ENCODE measurements at regions of chr9 and their contacts with region 1.

Region 1: DNA sequence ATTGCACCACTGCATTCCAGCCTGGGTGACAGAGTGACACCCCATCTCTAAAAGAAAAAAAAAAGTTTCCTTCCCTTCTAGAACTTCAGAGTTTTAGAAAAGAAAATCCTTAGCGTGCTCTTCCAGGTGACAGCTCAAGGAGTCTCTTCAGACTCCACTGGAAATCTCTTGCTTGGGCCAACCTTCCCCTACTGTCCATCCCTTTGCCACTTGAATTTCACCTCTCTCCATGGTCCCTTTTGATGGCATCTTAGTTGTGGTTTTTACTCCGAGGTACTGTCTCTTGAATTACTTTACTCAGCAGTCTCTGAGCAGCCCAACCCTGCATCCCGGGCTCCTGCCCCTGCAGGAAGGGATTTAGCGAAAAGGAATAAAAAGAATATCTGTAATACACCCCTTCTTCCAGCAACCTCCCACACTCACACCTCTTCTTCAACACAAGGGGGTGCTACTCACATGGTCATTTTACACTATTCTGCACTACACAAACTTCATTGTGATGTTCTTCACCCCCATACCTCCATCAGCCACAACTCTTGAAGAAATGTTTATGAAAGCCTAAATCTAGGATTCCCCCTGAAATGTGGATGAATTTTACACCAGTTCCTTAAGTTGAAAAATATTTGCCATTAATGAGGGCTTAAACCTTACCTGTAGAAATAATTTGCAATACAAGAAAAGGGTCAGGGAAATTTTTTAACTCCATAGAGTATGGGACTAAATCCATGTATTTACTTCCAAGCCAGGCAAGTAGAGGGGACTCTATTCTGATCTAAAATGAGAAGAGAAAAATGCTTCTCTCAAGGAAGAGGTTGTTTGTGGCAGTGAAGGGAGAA is 25.9 kb downstream of the TPD52L3 start:
- DNase-seq: peak; percentile 76
- H3K4me3 ChIP-seq: no peak overlapping the region
- H3K27ac ChIP-seq: no peak overlapping the region
- H3K4me1 ChIP-seq: no peaks in the 10 kb centered on the region
- CTCF ChIP-seq: peak; percentile 94

Region 2: DNA sequence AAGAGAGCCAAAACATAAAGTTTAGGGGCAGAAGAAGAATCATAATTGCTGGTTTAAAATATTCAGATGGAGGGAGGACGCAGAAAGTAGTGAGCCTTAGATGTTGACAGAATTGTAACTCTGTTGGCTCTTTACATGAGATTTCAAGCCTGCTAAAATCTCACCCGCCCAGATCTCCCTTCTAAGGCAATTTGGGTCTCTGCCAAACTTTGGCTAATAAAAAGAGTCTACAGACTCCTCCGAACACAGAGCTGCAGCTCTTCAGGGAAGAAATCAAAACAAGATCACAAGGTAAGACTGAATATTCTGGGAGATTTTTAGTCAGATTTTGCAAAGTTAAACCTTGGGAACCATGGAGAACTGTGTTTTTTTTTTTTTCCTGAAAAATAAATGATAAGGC is 138.5 kb before region 1 on chr9 and contains the start of gene IL33:
- CTCF ChIA-PET with region 1: no interaction called
- POLR2A ChIA-PET with region 1: no interaction called
- intact Hi-C with region 1: no loop called
- DNase-seq: no peak
- H3K4me3 ChIP-seq: no peak within 1 kb of the TSS
- H3K27ac ChIP-seq: no peak within 1 kb of the TSS
- H3K4me1 ChIP-seq: no peaks in the 10 kb centered on the region
- CTCF ChIP-seq: no peak
- total RNA-seq, gene IL33: not detected in 2 replicates

Region 3: DNA sequence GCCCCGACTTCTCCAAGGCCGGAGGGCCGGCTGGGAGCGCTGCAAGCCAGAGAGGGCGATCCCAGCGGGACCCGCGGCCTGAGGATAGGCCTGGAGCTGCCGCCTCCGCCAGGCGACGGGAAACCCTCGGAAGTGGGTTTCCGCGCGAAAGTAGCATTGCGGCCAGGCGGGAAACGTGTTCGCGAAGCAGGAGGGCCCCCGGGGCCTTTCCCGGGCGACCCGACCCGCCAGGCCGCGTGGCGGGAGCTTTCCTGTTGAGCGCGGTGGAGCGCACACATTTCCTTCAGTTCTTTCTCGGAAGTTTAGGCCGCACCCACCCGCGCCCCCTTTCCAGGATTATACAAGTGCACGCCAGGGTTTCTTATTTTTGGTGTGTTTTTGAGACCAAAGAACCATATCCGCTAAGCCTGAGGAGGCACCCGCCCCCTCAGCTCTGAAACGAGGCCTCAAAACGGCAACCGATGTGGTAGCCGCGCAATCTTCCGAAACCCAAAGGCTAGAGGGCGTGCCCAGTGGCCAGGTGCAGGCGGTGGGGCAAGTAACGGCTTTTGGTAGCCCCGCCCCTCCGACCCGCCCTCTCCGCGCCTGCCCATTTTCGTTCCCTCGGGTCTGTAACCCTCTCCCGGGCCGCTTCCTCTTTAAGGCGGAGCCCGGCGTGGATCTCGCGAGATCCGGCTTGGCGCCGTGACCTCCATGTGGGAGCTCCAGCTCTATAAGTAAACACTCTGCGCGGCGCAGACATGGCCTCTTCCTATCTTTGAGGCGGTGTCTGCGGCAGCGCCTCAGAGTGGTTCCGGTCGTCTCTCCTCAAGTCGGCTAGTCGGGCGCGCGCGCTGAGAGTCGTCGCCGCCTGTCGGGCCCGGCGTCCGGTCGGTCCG is 58.7 kb after region 1 on chr9 and contains the start of gene UHRF2:
- CTCF ChIA-PET with region 1: no interaction called
- POLR2A ChIA-PET with region 1: interaction called, 7 read pairs
- intact Hi-C with region 1: loop called (anchors 5 kb)
- DNase-seq: peak; percentile 99
- H3K4me3 ChIP-seq: peak within 1 kb of the TSS; percentile 83
- H3K27ac ChIP-seq: peak within 1 kb of the TSS; percentile 94
- H3K4me1 ChIP-seq: peaks cover 49% of the 10 kb centered on the region
- CTCF ChIP-seq: no peak
- total RNA-seq, gene UHRF2: 76.1 and 76.6 TPM in 2 replicates

Region 4: GRCh38 chr9:6502399-6502798 is 148.3 kb after region 1 on chr9:
- CTCF ChIA-PET with region 1: no interaction called
- POLR2A ChIA-PET with region 1: no interaction called
- intact Hi-C with region 1: loop called (anchors 5 kb)
- DNase-seq: no peak
- H3K4me3 ChIP-seq: no peak overlapping the region
- H3K27ac ChIP-seq: no peak overlapping the region
- H3K4me1 ChIP-seq: no peaks in the 10 kb centered on the region
- CTCF ChIP-seq: no peak

Region 5: DNA sequence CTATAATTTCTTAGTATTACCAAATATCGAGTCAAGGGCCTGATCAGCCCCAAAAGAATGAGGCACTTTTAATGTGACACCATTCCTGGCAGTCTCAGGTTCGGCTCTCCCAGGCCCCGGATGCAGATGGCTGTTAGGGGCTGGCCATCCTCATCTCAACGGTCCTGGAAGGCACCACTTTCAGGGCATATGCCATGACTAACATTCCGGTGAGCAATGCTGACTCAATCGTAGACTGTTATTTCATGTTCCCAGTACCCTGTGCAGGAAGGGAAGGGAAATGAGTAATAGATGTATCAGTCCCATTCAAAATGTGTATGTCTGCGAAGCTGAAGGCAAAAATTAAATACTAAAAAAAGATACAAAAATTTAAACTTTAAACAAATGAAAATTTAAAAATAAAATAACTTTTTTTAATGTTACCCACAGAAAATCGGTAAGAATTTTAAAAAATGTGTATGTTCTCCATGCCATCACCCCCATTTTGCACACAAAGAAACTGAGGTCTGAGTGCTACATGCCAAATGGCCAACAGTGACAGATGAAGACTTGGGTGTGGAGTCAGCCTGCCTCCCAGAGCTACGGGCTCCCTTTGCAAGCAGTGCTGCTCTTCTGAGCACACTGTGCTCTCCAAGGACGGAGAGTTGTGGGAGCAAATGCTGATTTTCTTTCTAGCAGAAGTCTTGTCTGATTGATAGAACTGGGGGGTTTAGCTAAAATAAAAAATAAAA is 212.5 kb after region 1 on chr9:
- CTCF ChIA-PET with region 1: no interaction called
- POLR2A ChIA-PET with region 1: interaction called, 3 read pairs
- intact Hi-C with region 1: loop called (anchors 1 kb)
- DNase-seq: no peak
- H3K4me3 ChIP-seq: no peak overlapping the region
- H3K27ac ChIP-seq: no peak overlapping the region
- H3K4me1 ChIP-seq: no peaks in the 10 kb centered on the region
- CTCF ChIP-seq: no peak

Region 6: GRCh38 chr9:6605202-6605601 is 251.1 kb after region 1 on chr9:
- CTCF ChIA-PET with region 1: no interaction called
- POLR2A ChIA-PET with region 1: no interaction called
- intact Hi-C with region 1: no loop called
- DNase-seq: peak; percentile 26
- H3K4me3 ChIP-seq: no peak overlapping the region
- H3K27ac ChIP-seq: no peak overlapping the region
- H3K4me1 ChIP-seq: no peaks in the 10 kb centered on the region
- CTCF ChIP-seq: no peak

Region 7: DNA sequence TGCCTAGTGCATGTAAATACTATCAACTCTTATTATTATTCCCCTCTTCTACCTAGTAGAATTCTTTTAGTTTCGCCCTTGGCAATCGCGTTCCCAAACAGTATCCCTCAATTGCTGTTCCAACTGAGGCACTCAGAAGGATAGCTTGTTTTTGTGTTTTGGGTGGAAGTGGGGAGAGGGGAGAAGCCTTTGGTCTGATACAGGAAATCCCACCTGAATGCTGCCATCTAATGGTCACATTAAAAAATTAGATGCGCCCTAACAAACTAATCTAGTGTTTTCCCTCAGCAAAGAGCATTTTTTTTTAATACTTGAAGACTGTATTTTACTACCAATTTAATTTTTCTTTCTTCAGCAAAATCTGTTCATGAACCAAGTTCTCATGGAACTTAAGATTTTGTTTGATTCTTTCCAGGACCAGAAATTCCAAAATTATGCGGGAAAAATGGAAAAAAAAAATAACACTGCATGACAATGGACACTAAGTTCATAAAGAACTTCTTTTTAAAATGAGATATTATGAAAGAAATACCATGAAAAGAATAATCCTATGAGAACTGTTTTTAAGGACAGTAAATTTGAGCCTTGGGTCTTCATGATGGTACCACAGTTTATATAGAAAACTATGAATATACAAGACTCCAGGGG is 313.7 kb after region 1 on chr9:
- CTCF ChIA-PET with region 1: no interaction called
- POLR2A ChIA-PET with region 1: no interaction called
- intact Hi-C with region 1: loop called (anchors 1 kb)
- DNase-seq: peak; percentile 55
- H3K4me3 ChIP-seq: no peak overlapping the region
- H3K27ac ChIP-seq: no peak overlapping the region
- H3K4me1 ChIP-seq: no peaks in the 10 kb centered on the region
- CTCF ChIP-seq: peak; percentile 92